AG04450 (cell line): ENCODE measurements at regions of chr7 and their contacts with region 1.

Region 1: DNA sequence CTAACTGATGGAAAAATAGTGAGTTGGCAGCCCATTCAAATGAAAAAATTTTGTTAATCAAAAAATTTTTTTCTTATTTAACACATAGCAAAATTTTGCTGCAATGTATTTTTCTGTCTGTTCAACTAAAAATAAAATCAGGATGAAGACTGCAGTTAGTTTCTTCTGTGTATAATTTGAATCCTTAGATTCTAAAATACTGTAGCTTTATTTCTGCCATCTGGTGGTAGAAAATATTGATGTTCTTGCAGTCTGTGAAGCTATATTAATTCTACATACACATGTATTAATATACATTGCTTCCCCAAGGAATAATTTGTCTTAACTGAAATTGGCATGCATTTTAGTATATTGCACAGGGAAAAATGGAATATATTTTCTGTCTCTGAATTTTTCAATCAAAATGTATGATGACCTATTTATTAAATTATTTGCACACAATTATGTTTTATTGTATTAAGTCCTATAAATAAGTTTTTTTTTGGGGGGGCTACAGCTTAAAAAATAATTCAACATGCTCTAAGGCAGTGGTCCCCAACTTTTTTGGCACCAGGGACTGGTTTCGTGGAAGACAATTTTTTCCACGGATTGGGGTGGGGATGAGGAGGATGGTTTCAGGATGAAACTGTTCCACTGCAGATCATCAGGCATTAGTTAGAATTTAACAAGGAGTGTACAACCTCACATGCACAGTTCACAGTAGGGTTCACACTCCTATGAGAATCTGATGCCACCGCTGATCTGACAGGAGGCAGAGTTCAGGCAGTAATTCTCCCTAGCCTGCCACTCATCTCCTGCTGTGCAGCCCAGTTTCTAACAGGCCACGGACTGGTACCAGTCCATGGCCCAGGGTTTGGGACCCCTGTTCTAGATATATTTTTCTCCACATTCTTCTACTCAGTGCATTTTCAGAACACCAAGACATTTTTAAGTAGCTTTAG is 119.4 kb downstream of the GNAT3 start:
- DNase-seq: no peak
- H3K4me3 ChIP-seq: no peak overlapping the region
- H3K27ac ChIP-seq: no peak overlapping the region
- H3K27me3 ChIP-seq: no peaks in the 10 kb centered on the region
- CTCF ChIP-seq: peak; percentile 57

Region 2: DNA sequence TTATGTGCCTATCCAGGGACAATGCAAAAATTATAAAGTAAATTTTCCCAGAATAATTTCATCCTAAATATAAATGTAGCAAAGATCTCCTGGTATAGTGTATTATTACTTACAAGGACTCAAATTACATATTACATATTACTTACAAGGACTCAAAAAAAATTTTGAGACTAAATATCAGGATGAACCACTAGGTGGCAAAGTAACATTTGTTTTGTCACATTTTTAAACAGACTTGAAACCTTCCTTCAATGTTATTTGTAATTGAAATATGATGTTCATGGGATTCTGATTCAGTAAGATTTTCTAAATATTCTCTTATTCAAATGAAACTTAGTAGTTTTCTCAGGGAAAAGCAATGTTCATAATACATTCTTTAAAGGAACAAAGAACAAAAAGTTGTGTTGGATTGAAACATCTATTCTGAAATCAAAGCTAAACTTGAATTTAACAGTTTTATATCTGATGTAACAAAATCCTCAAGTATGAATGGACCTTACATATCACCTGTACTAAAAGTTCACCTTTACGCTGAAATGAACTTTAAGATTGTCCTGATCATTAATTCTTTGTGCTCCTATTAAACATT is 332.2 kb before region 1 on chr7:
- CTCF ChIA-PET with region 1: interaction called, 31 read pairs
- POLR2A ChIA-PET with region 1: no interaction called
- DNase-seq: peak; percentile 24
- H3K4me3 ChIP-seq: no peak overlapping the region
- H3K27ac ChIP-seq: no peak overlapping the region
- H3K27me3 ChIP-seq: no peaks in the 10 kb centered on the region
- CTCF ChIP-seq: peak; percentile 49

Region 3: GRCh38 chr7:80087051-80087770 is 305.3 kb before region 1 on chr7:
- CTCF ChIA-PET with region 1: interaction called, 12 read pairs
- POLR2A ChIA-PET with region 1: no interaction called
- DNase-seq: peak; percentile 59
- H3K4me3 ChIP-seq: no peak overlapping the region
- H3K27ac ChIP-seq: peak overlapping the region; percentile 77
- H3K27me3 ChIP-seq: no peaks in the 10 kb centered on the region
- CTCF ChIP-seq: no peak

Region 4: GRCh38 chr7:80095545-80095944 is 297.0 kb before region 1 on chr7:
- CTCF ChIA-PET with region 1: interaction called, 16 read pairs
- POLR2A ChIA-PET with region 1: no interaction called
- DNase-seq: no peak
- H3K4me3 ChIP-seq: no peak overlapping the region
- H3K27ac ChIP-seq: no peak overlapping the region
- H3K27me3 ChIP-seq: no peaks in the 10 kb centered on the region
- CTCF ChIP-seq: peak; percentile 50

Region 5: DNA sequence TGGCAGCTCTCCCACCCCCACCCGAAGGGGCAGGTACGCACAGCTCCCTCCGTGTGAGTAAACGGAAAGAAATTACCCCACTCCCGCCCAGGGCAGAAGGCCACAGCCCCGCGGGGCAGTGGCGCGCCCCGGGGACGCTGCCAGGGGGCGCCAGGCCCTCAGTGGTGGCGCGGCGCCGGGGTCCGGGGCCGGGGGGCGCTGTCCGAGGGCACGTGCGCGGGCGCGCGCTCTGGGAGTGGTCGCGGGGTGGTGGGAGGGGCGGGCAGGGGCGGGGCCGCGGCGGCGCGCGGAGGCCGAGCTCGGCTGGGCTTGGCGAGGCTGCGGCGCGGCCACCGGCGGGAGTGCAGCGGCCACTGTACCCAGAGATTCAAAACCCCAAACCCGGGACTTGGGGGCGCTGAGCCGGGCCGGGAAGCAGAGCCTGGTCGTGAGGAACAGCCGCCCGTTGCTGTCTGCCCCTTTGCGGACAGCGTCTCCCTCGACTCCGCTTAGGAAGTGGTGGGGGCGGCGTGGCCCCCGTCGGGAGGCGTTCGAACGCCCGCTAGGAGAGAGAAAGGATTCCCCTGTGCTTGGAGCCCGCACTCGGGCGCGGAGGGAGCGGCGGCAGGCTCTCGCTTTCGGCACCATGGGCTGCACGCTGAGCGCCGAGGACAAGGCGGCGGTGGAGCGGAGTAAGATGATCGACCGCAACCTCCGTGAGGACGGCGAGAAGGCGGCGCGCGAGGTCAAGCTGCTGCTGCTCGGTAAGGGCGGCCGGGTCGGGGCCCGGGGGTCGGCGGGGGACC is 257.8 kb before region 1 on chr7 and contains the start of gene GNAI1:
- CTCF ChIA-PET with region 1: interaction called, 45 read pairs
- POLR2A ChIA-PET with region 1: interaction called, 3 read pairs
- DNase-seq: no peak
- H3K4me3 ChIP-seq: peak within 1 kb of the TSS; percentile 71
- H3K27ac ChIP-seq: peak within 1 kb of the TSS; percentile 57
- H3K27me3 ChIP-seq: no peaks in the 10 kb centered on the region
- CTCF ChIP-seq: peak; percentile 28; the same call in 1 of the 2 replicates
- polyA plus RNA-seq, gene GNAI1: 31.9 and 56.2 TPM in 2 replicates

Region 6: GRCh38 chr7:80145780-80146422 is 246.6 kb before region 1 on chr7:
- CTCF ChIA-PET with region 1: interaction called, 12 read pairs
- POLR2A ChIA-PET with region 1: no interaction called
- DNase-seq: peak; percentile 78
- H3K4me3 ChIP-seq: no peak overlapping the region; the same call in 1 of the 2 replicates
- H3K27ac ChIP-seq: peak overlapping the region; percentile 59
- H3K27me3 ChIP-seq: no peaks in the 10 kb centered on the region
- CTCF ChIP-seq: no peak

Region 7: GRCh38 chr7:80403686-80404241 is 11.3 kb after region 1 on chr7:
- CTCF ChIA-PET with region 1: interaction called, 11 read pairs
- POLR2A ChIA-PET with region 1: no interaction called
- DNase-seq: no peak
- H3K4me3 ChIP-seq: no peak overlapping the region
- H3K27ac ChIP-seq: no peak overlapping the region
- H3K27me3 ChIP-seq: no peaks in the 10 kb centered on the region
- CTCF ChIP-seq: no peak

Region 8: DNA sequence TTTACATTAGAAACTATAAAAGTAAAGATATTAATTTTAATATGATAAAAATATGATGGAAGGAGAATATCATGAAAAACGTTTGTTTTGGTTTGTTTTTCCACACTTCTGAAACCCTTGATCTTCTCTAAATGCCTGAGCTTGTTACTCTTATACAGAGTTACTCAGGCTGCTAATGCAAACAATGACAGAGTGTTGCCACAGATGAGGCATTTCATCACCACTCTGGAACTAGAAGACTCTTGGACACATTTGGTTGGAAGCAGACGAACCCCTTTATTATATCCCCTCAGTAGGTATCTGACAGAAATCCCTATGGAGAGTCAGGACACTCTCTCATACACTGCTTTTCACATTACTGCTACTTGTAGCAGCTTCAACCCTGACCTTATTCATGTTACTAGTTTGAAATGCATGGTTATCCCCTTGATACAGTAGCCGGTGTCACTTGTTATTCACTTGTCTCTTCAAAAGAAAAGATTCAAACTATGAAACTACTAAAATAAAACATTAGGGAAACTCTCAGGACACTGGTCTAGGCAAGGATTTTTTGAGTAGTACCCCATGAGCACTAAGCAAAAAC is 459.5 kb after region 1 on chr7:
- CTCF ChIA-PET with region 1: no interaction called
- POLR2A ChIA-PET with region 1: no interaction called
- DNase-seq: peak; percentile 44
- H3K4me3 ChIP-seq: no peak overlapping the region
- H3K27ac ChIP-seq: no peak overlapping the region
- H3K27me3 ChIP-seq: no peaks in the 10 kb centered on the region
- CTCF ChIP-seq: no peak